ENCODE measurements at regions of chr13 and their contacts with region 1.

Region 1: GRCh38 chr13:114226699-114227323 is 7.9 kb upstream of the CDC16 start:
- DNase-seq: peak; percentile 72 to 91 (median 87)
- ATAC-seq: peak; percentile 82
- H3K4me3 ChIP-seq: no peak overlapping the region
- H3K4me3 Mint-ChIP-seq: peak overlapping the region; percentile 54
- H3K27ac ChIP-seq: no peak overlapping the region
- H3K27ac Mint-ChIP-seq: peak overlapping the region; percentile 86
- H3K4me1 ChIP-seq: peaks cover 40% of the 10 kb centered on the region
- H3K4me1 Mint-ChIP-seq: peaks cover 42% of the 10 kb centered on the region
- H3K27me3 ChIP-seq: no peaks in the 10 kb centered on the region
- H3K27me3 Mint-ChIP-seq: peaks cover 6% of the 10 kb centered on the region
- CTCF ChIP-seq: peak; percentile 93

Region 2: DNA sequence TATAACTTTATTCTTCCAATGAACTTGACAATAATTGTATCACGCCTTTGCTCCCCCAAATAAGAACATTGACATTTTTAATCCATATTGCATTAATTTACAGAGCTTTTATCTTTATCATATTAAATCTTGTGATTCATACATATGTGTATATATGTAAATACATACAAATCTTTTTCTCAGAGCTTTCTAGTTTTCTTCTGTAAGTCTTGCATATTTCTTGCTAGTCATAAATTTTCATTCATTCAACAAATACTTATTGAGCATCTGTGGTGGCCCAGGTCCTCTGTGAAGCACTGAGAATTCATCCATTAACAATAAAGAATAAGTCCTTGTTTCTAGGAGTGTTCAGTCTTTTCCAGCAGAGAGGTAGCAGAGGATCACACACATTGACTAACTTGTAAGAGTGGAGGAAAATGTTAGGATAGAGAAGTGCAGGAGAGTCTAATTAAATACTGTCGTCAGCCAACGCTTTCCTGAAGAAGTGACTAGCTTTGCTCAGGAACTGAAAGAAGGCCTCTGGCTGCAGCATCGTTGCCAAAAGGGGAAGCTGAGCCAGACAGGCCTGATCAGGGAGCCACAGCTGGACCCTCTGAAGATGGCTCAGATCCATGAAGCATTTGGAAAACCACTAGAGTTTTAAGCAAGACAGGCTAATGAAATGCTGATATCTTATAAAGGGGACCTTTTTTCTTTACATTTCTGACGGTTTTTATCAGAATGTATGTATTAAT is 968.3 kb before region 1 on chr13:
- CTCF ChIA-PET with region 1: no interaction called
- POLR2A ChIA-PET with region 1: no interaction called
- intact Hi-C with region 1: no loop called
- DNase-seq: no peak
- ATAC-seq: no peak
- H3K4me3 ChIP-seq: no peak overlapping the region
- H3K4me3 Mint-ChIP-seq: no peak overlapping the region
- H3K27ac ChIP-seq: no peak overlapping the region
- H3K27ac Mint-ChIP-seq: no peak overlapping the region
- H3K4me1 ChIP-seq: no peaks in the 10 kb centered on the region
- H3K4me1 Mint-ChIP-seq: no peaks in the 10 kb centered on the region
- H3K27me3 ChIP-seq: no peaks in the 10 kb centered on the region
- H3K27me3 Mint-ChIP-seq: no peaks in the 10 kb centered on the region
- CTCF ChIP-seq: no peak

Region 3: DNA sequence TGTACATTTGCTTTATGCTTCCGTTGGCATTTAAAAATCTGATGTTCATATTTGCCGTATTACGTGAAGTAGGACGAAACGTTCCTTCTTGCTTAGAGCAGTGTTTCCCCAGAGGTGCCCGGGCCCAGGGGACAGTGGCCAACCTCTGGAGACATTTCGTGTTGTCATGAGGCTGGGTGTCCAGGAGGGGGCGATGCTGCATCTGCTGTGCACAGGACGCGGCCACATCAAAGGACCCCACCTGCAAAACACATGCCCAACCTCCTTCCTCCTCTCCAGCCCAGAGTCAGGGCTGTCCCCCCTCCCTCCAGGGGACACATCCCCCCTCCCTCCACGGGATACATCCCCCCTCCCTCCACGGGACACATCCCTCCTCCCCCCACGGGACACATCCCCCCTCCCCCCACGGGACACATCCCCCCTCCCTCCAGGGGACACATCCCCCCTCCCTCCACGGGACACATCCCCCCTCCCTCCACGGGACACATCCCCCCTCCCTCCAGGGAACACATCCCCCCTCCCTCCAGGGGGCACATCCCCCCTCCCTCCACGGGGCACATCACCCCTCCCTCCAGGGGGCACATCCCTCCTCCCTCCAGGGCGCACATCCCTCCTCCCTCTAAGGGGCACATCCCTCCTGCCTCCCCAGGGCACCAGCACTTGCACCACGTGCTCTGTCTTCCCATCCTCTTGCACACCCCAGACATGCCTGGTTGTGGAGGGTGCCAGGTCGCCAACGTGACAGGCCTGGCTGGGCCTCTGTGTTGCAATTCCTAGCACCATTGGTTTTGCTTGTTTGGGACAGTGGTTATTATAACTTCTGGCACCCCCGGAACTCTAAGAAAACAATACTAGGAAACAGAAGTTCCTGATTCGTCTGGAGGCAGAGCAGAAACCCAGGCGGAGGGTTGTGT is 409.6 kb before region 1 on chr13:
- CTCF ChIA-PET with region 1: interaction called, 4 read pairs
- POLR2A ChIA-PET with region 1: no interaction called
- intact Hi-C with region 1: loop called in 1 of 2 experiments (anchors 1 kb)
- DNase-seq: peak; percentile 74 to 93 (median 90)
- ATAC-seq: peak; percentile 97
- H3K4me3 ChIP-seq: no peak overlapping the region
- H3K4me3 Mint-ChIP-seq: peak overlapping the region; percentile 82
- H3K27ac ChIP-seq: no peak overlapping the region
- H3K27ac Mint-ChIP-seq: peak overlapping the region; percentile 52
- H3K4me1 ChIP-seq: peaks cover 10% of the 10 kb centered on the region
- H3K4me1 Mint-ChIP-seq: peaks cover 22% of the 10 kb centered on the region
- H3K27me3 ChIP-seq: no peaks in the 10 kb centered on the region
- H3K27me3 Mint-ChIP-seq: peaks cover 2% of the 10 kb centered on the region
- CTCF ChIP-seq: peak; percentile 90

Region 4: GRCh38 chr13:114024603-114025404 is 202.0 kb before region 1 on chr13:
- CTCF ChIA-PET with region 1: no interaction called
- POLR2A ChIA-PET with region 1: interaction called, 3 read pairs
- intact Hi-C with region 1: loop called in 1 of 2 experiments (anchors 5 kb)
- DNase-seq: peak in 1 of 9 experiments; percentile 10
- ATAC-seq: no peak
- H3K4me3 ChIP-seq: no peak overlapping the region
- H3K4me3 Mint-ChIP-seq: no peak overlapping the region
- H3K27ac ChIP-seq: peak overlapping the region in 1 of 2 experiments; percentile 31
- H3K27ac Mint-ChIP-seq: no peak overlapping the region
- H3K4me1 ChIP-seq: no peaks in the 10 kb centered on the region
- H3K4me1 Mint-ChIP-seq: no peaks in the 10 kb centered on the region
- H3K27me3 ChIP-seq: no peaks in the 10 kb centered on the region
- H3K27me3 Mint-ChIP-seq: no peaks in the 10 kb centered on the region
- CTCF ChIP-seq: no peak

Region 5: DNA sequence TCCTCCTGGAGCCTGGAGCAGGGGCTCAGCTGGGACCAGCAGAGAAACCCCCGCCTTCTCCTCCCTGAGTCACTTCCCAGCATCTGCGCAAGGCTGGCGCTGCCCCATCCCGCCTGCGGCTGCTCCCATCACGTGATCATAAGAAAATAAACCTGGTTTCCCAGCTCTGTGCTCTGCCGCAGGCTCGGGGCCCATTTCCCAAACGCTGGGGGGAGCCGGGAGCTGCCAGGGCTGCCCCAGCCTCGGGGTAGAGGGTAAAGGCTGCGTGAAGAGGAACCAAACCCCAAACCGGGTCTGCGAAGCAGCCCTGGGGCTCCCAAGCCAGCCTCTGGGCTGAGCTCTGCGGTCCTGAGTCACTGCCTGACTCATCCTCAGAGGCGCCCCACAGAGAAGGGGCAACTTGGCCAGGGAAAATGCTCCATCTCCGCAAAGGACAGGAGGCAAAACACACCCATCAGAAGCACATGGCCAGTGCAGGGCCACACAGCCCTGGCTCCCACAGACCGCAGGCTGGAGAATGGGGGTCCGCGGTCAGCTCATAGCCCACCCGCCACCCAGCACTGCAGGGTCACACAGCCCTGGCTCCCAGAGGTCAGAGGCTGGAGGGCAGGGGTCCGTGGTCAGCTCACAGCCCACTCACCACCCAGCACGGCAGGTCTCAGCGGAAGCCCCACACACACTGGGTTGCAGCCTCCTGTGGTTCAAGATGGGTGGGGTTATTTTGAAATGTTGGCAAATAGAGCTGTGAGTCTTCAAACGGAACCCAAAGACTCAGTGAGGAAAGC is 161.5 kb before region 1 on chr13:
- CTCF ChIA-PET with region 1: interaction called, 6 read pairs
- POLR2A ChIA-PET with region 1: interaction called, 3 read pairs
- intact Hi-C with region 1: loop called (anchors 2 kb)
- DNase-seq: peak; percentile 29 to 84 (median 76)
- ATAC-seq: peak; percentile 68
- H3K4me3 ChIP-seq: peak overlapping the region; percentile 37 to 72
- H3K4me3 Mint-ChIP-seq: peak overlapping the region; percentile 84
- H3K27ac ChIP-seq: peak overlapping the region; percentile 29 to 78
- H3K27ac Mint-ChIP-seq: peak overlapping the region; percentile 96
- H3K4me1 ChIP-seq: peaks cover 63% of the 10 kb centered on the region
- H3K4me1 Mint-ChIP-seq: peaks cover 67% of the 10 kb centered on the region
- H3K27me3 ChIP-seq: no peaks in the 10 kb centered on the region
- H3K27me3 Mint-ChIP-seq: no peaks in the 10 kb centered on the region
- CTCF ChIP-seq: no peak

Region 6: DNA sequence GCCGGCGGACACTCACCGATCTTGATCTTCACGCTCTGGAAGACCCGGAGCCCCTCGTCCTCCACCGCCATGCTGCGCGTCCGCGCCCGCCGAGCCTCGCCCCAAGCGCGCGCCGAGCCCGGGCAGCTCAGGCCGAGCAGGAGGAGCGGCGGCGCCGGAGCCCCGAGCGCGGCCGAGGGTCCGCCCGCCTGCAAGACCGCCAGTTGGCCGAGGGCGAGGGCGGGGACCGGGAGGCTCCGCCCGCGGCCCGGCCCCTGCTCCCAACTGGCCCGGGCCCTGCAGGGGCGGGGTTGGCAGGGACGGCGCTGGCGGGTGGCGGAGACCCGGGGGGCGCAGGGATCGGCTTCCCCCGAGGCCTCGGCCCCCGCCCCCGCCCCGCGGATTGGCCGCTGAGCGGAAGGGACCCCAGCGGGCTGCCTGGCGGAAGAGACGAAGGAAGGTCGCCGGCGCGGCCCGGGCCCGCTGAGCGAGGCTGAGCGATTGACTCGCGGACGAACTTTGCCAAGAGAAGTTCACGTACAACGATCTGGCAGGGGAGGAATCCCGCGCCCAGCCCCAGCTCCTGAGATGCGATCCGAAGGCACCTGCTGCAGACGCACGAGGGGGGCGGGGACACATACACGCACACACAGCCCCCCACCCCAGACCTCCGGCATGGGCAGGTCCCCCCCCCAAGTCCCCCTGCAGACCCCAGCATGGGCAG is 94.2 kb before region 1 on chr13 and contains the start of gene RASA3:
- CTCF ChIA-PET with region 1: interaction called, 8 read pairs
- POLR2A ChIA-PET with region 1: interaction called, 14 read pairs
- intact Hi-C with region 1: loop called in 1 of 2 experiments (anchors 1 kb)
- DNase-seq: peak in 7 of 9 experiments; percentile 55 to 84 (median 73)
- ATAC-seq: peak; percentile 35
- H3K4me3 ChIP-seq: peak within 1 kb of the TSS; percentile 96 to 99
- H3K4me3 Mint-ChIP-seq: peak within 1 kb of the TSS; percentile 100
- H3K27ac ChIP-seq: peak within 1 kb of the TSS; percentile 90 to 92
- H3K27ac Mint-ChIP-seq: peak within 1 kb of the TSS; percentile 100
- H3K4me1 ChIP-seq: peaks cover 43% of the 10 kb centered on the region
- H3K4me1 Mint-ChIP-seq: peaks cover 55% of the 10 kb centered on the region
- H3K27me3 ChIP-seq: no peaks in the 10 kb centered on the region
- H3K27me3 Mint-ChIP-seq: no peaks in the 10 kb centered on the region
- CTCF ChIP-seq: no peak
- total RNA-seq, gene RASA3: 144 TPM

Region 7: GRCh38 chr13:114185182-114185971 is 41.4 kb before region 1 on chr13:
- CTCF ChIA-PET with region 1: no interaction called
- POLR2A ChIA-PET with region 1: no interaction called
- intact Hi-C with region 1: no loop called
- DNase-seq: no peak
- ATAC-seq: no peak
- H3K4me3 ChIP-seq: no peak overlapping the region
- H3K4me3 Mint-ChIP-seq: no peak overlapping the region
- H3K27ac ChIP-seq: no peak overlapping the region
- H3K27ac Mint-ChIP-seq: no peak overlapping the region
- H3K4me1 ChIP-seq: peaks cover 8% of the 10 kb centered on the region
- H3K4me1 Mint-ChIP-seq: peaks cover 20% of the 10 kb centered on the region
- H3K27me3 ChIP-seq: no peaks in the 10 kb centered on the region
- H3K27me3 Mint-ChIP-seq: no peaks in the 10 kb centered on the region
- CTCF ChIP-seq: no peak